AG04449 (cell line): ENCODE measurements at regions of chr2 and their contacts with region 1.

Region 1: DNA sequence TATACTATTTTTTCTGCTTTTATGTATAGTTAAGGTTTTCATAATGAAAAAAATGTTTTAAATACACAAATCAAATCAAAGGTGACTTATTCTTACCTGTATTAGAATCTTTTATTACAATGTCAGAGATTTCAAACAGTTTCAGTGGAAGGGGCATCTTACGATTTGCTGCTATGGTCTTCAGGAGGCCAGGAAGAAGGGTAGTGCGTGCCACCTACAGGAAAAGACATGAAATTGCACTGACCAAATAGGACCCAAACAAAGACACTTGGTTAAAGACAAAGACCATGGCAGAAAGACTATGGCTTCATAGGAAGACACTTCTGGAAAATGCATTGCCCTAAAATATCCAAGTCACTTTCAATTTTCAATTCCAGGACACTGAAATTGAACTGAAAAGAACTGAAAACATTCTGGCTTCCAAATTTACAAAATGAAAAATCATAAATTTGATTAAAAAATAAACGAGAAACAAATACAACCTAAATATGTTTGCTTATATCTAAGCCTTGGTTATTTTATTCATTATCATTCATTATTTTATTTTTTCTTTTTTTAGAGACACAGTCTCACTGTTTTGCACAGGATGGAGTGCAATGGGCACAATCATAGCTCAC is 42.1 kb downstream of the FARSB start:
- DNase-seq: no peak
- H3K4me3 ChIP-seq: no peak overlapping the region
- CTCF ChIP-seq: peak; percentile 67

Region 2: DNA sequence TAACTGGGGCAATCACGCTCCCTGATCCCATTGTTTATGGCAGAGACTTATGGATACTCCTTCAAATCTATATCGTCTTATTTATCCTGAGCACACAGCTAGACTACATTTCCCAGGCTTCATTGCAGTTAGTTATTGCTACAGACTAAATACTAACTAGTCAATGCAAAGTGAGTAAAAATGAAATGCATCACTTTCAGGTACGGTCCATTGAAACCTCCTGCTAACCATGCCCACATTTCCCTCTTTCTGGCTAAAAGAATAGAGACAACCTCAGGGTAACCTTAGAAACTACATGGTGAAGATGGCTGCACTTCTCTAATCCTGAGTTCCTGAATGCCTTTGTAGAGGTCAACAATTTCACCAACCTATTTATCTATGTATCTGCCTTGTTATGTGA is 1479.1 kb before region 1 on chr2:
- CTCF ChIA-PET with region 1: no interaction called
- POLR2A ChIA-PET with region 1: no interaction called
- DNase-seq: no peak
- H3K4me3 ChIP-seq: no peak overlapping the region
- CTCF ChIP-seq: no peak

Region 3: DNA sequence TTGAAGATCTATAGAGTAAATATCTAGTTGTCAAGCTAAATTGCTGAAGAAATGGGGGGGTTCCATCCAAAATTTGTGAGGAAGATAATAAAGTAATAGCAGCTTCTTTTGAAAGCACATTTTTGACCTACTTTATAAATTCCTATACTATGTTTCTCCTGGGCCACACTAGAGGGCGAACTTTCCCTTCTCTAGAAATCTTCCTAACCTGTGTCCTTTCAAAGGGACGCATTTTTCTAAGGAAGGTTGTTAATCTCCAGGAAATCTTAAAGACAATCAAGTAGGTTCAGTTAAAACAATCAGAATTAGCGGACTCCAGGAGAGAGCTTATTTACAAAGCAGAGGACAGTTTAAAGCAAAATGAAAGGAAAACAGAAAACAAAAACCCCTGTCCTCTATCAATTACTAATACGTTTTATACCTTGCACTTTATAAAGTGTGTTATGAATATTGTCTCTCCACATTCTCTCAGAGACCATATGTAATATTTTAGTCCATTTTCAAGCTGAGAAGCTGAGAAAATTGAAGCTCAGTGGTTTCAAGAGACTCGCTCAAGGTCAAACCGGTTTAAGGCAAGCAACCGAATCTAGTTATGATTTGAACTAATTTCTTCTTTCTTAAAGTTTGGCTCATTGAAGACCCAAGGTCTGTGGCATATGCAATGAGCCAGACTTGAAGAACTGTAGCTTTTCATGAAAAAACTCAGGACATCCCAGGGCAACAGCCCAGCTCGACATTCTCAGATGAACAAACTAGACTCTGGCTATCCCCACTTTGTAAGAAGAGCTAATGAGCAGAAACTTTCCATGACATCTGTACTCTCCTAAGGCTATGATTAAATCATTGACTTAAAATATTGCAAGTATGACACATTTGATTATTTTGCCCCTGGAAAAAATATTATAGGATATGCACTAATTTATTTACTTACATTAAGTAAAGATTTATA is 588.6 kb before region 1 on chr2:
- CTCF ChIA-PET with region 1: interaction called, 13 read pairs
- POLR2A ChIA-PET with region 1: no interaction called
- DNase-seq: no peak
- H3K4me3 ChIP-seq: no peak overlapping the region
- CTCF ChIP-seq: peak; percentile 40

Region 4: DNA sequence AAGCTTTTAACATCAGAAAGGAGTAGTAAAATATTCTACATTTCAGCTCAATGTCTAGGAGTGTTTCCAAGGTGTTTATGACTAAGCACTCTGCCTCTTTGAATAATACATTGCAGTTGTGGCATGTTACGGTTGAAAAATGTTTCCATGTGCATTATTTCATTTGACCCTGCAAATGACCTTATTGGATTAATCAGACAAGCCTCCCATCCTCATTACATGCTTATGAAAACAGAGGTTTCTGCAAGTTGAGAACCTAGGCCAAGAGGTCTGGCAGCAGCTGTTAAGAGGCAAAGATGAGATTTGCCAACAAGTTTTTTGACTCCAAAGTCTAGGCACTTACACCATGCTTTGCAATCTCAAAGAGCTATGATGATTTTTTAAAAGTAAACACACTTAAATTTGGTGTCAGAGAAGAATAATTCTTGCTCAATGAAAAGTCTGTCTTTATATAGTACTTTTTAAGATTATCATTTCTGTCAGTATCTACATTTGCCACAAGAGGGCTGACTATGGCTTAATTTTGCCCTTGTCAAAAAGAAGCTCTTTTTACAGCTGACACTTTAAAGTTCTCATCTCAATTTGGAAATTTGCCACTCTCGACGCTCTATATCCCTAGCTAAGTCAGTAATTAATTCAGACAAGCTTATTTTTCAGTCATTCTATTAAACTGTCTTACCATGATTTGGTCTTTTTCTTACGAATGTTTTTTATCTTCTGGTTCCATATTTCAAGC is 575.6 kb before region 1 on chr2:
- CTCF ChIA-PET with region 1: interaction called, 12 read pairs
- POLR2A ChIA-PET with region 1: no interaction called
- DNase-seq: no peak
- H3K4me3 ChIP-seq: no peak overlapping the region
- CTCF ChIP-seq: peak; percentile 20

Region 5: GRCh38 chr2:222057347-222058073 is 556.3 kb before region 1 on chr2:
- CTCF ChIA-PET with region 1: interaction called, 38 read pairs
- POLR2A ChIA-PET with region 1: no interaction called
- DNase-seq: no peak
- H3K4me3 ChIP-seq: no peak overlapping the region
- CTCF ChIP-seq: peak; percentile 34

Region 6: GRCh38 chr2:222318026-222318711 is 295.7 kb before region 1 on chr2:
- CTCF ChIA-PET with region 1: interaction called, 24 read pairs
- POLR2A ChIA-PET with region 1: no interaction called
- DNase-seq: no peak
- H3K4me3 ChIP-seq: peak overlapping the region; percentile 54
- CTCF ChIP-seq: peak; percentile 26

Region 7: DNA sequence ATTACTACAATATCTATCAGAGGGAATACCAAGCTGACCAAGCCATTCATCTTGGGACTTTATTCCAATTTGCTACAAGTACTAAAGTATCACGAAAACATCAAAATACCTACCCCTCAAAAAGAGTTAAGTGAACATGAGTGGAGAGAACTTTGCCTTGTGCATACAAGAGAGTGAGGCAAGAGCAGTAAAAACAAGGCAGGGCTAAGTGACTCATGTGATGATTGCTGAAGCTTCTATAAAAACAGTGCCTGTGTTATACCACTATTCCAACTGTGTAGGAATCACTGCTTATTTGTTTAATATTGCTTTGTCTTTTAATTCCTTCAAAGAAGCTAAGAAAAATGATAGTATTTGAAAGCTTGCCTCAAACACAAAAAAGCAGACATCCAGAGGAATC is 19.1 kb before region 1 on chr2:
- CTCF ChIA-PET with region 1: interaction called, 11 read pairs
- POLR2A ChIA-PET with region 1: no interaction called
- DNase-seq: no peak
- H3K4me3 ChIP-seq: no peak overlapping the region
- CTCF ChIP-seq: no peak